Activated T-helper 2 cell treated with anti-CD3 and anti-CD28 coated beads, Interferon-gamma antibody, Interleukin-2, Interleukin-4, amounts not matched to agents 10 μg/mL and 5 μg/mL and 100 μg/mL, durations not matched to agents 14 hours and 24 hours and 36 hours (primary cell): ENCODE measurements at regions of chr10 and their contacts with region 1.

Region 1: DNA sequence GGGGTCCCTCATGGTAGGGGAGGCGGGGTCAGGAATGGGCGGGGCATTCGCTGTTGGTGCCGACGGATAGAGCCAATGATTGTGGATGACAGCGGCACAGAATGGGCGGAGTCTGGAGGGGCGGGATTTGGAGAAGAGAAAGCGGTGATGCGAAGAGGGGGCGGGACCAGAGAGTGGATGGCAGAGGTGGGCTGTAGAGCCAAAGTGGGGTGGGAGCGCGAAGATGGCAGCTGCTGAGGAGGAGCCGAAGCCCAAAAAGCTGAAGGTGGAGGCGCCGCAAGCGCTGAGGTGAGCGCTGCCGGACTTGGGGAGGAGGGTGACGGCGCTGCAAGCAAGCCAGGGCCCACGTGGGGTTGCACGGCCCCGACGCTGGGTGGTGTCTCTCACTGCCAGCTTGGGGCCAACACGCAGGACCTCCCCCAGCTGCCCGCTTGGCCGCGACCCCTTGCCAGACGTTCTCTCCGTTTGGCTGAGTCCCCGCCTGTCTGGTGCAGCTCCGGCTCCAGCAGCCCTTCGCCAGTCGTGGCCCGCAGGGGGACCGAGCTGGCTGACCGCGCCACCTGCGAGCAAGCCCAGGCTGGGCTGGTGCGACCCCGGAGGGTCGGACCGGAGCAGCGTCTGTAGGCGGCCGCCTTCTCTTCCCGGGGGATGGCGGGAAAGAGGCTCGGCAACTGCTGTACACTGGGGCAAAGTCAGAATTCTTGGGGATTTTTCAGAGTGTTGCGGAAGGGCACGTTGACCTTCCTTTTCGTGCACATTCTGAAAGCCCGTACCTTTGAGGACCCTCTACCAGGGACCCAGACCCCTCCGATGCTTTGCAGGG is at the start of gene ADK:
- DNase-seq: peak; percentile 99
- H3K4me3 Mint-ChIP-seq: no peak within 1 kb of the TSS
- H3K27ac Mint-ChIP-seq: no peak within 1 kb of the TSS
- H3K4me1 Mint-ChIP-seq: peaks cover 23% of the 10 kb centered on the region
- H3K27me3 Mint-ChIP-seq: no peaks in the 10 kb centered on the region
- total RNA-seq, gene ADK: 64.2 and 64.5 TPM in 2 replicates

Region 2: GRCh38 chr10:73810735-73811465 is 340.4 kb before region 1 on chr10:
- intact Hi-C with region 1: loop called (anchors 1 kb)
- DNase-seq: peak; percentile 63
- H3K4me3 Mint-ChIP-seq: peak overlapping the region; percentile 90
- H3K27ac Mint-ChIP-seq: peak overlapping the region; percentile 94
- H3K4me1 Mint-ChIP-seq: peaks cover 28% of the 10 kb centered on the region
- H3K27me3 Mint-ChIP-seq: no peaks in the 10 kb centered on the region

Region 3: DNA sequence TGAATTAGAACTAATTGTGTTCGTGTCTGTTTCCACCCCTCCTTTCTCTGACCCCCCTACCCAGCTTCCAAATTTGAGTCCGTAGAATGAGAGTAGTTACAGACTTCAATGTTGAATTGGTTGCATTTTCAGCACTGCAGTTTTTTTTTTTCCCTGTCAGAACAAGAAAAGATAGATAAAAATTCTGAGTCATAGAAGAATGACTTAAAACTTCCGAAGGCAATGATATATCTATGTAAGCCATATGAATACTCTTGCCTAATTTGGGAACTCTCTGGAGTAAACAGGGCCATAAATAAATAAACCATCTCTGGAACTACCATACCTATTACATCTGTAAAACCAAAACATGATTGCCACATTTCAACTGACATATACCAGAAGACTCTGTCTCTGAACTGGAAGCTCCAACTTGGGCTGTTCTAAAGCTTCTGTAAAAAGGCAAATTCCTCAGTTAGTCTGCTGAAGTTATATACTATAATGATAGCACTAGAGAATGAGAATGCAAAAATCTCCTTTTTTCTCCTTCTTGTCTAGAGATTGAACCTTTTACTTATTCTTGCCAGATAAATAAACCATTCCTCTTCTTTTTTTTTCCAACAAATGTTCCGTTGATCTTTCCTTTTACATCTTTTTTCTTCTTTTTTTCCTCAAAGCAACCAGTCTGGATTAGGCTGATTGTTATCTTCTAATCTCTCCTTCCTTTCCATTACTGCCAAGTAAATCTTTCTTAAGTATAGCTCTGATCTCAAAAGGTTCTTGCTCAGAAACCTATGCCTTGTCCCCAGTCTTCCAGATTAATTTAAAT is 129.8 kb before region 1 on chr10:
- intact Hi-C with region 1: no loop called
- DNase-seq: no peak
- H3K4me3 Mint-ChIP-seq: no peak overlapping the region
- H3K27ac Mint-ChIP-seq: peak overlapping the region; percentile 53
- H3K4me1 Mint-ChIP-seq: peaks cover 24% of the 10 kb centered on the region
- H3K27me3 Mint-ChIP-seq: no peaks in the 10 kb centered on the region

Region 4: GRCh38 chr10:74176380-74177139 is 25.3 kb after region 1 on chr10:
- intact Hi-C with region 1: loop called (anchors 1 kb)
- DNase-seq: peak; percentile 96
- H3K4me3 Mint-ChIP-seq: peak overlapping the region; percentile 92
- H3K27ac Mint-ChIP-seq: peak overlapping the region; percentile 97
- H3K4me1 Mint-ChIP-seq: peaks cover 43% of the 10 kb centered on the region
- H3K27me3 Mint-ChIP-seq: no peaks in the 10 kb centered on the region

Region 5: GRCh38 chr10:74189999-74190421 is 38.7 kb after region 1 on chr10:
- intact Hi-C with region 1: loop called (anchors 5 kb)
- DNase-seq: no peak
- H3K4me3 Mint-ChIP-seq: peak overlapping the region; percentile 65
- H3K27ac Mint-ChIP-seq: peak overlapping the region; percentile 95
- H3K4me1 Mint-ChIP-seq: peaks cover 52% of the 10 kb centered on the region
- H3K27me3 Mint-ChIP-seq: no peaks in the 10 kb centered on the region

Region 6: DNA sequence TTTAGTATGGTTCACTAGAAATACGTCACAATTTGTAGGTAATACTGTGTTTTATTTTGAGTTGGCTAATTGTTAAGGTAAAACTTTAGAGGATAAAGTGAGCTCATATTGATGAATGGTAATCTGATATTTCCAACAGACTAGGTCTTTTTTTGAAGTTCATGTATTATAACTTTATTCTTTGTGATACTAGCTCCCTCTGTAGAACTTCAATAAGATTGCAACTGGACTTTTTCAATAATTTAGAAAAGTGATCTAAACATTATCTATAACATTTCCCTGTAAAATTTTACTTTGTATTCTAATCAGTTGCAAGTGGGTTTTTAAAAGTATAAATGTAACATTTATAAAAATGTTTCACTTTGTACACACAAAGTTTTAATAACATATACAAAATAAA is 83.3 kb after region 1 on chr10:
- intact Hi-C with region 1: loop called (anchors 5 kb)
- DNase-seq: no peak
- H3K4me3 Mint-ChIP-seq: no peak overlapping the region
- H3K27ac Mint-ChIP-seq: no peak overlapping the region
- H3K4me1 Mint-ChIP-seq: peaks cover 6% of the 10 kb centered on the region
- H3K27me3 Mint-ChIP-seq: no peaks in the 10 kb centered on the region

Region 7: DNA sequence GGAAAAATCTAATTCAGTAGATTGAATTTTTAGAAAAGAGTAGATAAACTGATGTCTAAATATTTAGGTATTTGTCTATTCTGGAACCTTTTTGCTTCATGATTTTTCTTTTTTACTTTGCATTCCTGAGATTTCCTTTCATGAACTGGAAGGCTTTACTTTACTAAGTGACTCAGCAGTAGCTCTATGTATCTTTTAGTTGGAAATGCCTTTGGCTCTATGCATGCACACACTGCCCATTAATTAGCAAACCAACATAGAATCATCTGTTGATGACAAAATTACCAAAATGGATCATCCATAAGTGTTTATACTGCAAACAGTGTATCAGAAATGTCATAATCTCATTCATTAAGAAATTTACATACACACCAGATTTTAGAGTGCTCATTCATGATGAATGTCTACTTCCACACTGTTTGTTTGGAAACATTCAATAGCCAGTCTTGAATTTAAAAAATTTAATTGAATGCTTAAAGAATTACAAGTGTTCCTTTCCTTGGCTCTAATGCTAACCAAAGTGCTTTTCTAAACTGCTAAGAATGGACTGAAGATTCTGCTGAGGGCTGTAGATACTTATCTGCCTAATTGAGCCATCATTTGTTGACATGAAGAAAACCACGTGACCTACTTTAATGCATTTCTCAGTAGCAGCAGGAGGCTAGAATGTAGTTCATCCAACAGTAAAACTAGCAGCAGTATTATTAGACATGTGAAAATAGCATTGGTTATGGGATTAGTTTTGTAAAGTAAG is 281.8 kb after region 1 on chr10:
- intact Hi-C with region 1: no loop called
- DNase-seq: no peak
- H3K4me3 Mint-ChIP-seq: no peak overlapping the region
- H3K27ac Mint-ChIP-seq: no peak overlapping the region
- H3K4me1 Mint-ChIP-seq: peaks cover 3% of the 10 kb centered on the region
- H3K27me3 Mint-ChIP-seq: no peaks in the 10 kb centered on the region

Region 8: DNA sequence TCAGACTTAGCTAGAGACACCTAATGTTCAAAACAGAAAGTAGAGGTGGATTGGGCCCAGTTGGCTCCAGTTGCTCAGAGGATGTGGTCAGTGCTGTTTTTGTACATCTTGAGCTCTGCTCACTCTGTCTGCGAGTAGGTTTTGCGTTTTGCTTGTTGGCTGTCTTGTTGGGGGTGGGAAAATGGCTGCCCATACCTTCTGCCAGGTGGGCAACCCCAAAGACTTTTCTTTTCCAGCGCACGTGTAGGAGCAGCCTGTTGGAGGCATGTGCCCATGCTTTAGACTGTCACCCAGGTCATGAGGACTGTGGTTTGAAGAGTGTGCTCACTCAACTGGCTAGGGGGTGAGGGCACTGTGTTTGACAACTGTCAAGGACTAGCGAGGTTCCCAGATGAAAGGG is 749.0 kb after region 1 on chr10:
- intact Hi-C with region 1: no loop called
- DNase-seq: peak; percentile 25
- H3K4me3 Mint-ChIP-seq: no peak overlapping the region
- H3K27ac Mint-ChIP-seq: peak overlapping the region; percentile 31
- H3K4me1 Mint-ChIP-seq: peaks cover 52% of the 10 kb centered on the region
- H3K27me3 Mint-ChIP-seq: no peaks in the 10 kb centered on the region

Region 9: GRCh38 chr10:75235375-75236177 is 1084.3 kb after region 1 on chr10 and contains the start of gene COMTD1:
- intact Hi-C with region 1: loop called (anchors 10 kb)
- DNase-seq: peak; percentile 92
- H3K4me3 Mint-ChIP-seq: peak within 1 kb of the TSS; percentile 81
- H3K27ac Mint-ChIP-seq: peak within 1 kb of the TSS; percentile 70
- H3K4me1 Mint-ChIP-seq: peaks cover 16% of the 10 kb centered on the region
- H3K27me3 Mint-ChIP-seq: no peaks in the 10 kb centered on the region
- total RNA-seq, gene COMTD1: 38.5 and 38.7 TPM in 2 replicates